HCT116 (cell line): ENCODE measurements at regions of chr12 and their contacts with region 1.

Region 1: GRCh38 chr12:122123051-122123760 is 44.6 kb downstream of the MLXIP start:
- DNase-seq: peak; percentile 41
- ATAC-seq: peak; percentile 81
- H3K4me3 ChIP-seq: no peak overlapping the region
- H3K27ac ChIP-seq: peak overlapping the region; percentile 47
- H3K4me1 ChIP-seq: peaks cover 11 to 12% of the 10 kb centered on the region in 2 experiments
- H3K27me3 ChIP-seq: no peaks in the 10 kb centered on the region
- CTCF ChIP-seq: peak; percentile 70 to 88 (median 86)
- POLR2A ChIP-seq: no peak
- RAD21 ChIP-seq: peak; percentile 96

Region 2: DNA sequence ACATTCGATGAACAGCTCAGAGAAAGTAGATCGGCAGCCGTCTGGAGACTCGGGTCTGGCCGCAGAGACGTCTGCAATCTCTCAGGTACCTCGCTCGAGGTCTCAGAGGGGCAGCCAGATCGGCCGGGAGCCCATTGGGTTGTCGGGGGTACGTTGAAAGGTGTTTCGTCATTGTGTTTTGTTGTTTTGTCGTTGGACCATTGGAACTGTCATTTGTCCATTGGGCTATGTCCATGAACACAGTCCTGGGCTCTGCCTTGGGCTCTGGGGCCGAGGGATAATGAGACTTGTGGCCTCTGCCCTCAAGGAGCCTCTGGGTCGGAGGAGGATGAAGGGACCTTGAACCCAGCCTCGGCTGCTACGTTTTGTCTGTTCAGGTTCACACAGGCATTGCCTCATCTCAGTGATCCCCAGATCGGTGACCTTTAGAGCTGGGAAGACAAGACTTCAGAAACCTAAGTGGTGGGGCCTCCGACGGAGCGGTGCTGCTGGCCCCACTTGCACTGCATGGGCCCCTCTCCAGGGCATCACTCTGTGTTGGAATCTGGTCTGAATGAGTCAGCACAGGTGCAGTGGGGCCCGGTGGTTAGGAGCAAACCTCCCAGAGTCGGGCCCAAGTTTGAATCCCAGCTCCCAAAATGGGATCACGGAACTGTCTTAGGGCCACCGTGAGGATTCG is 68.2 kb before region 1 on chr12:
- CTCF ChIA-PET with region 1: interaction called, 29 read pairs
- POLR2A ChIA-PET with region 1: no interaction called
- RAD21 ChIA-PET with region 1: interaction called in 1 of 2 experiments, 5 read pairs
- intact Hi-C with region 1: loop called (anchors 1 kb)
- DNase-seq: no peak
- ATAC-seq: no peak
- H3K4me3 ChIP-seq: no peak overlapping the region
- H3K27ac ChIP-seq: no peak overlapping the region
- H3K4me1 ChIP-seq: peaks cover 0 to 6% of the 10 kb centered on the region in 2 experiments; a peak in 1 of 4 replicates
- H3K27me3 ChIP-seq: no peaks in the 10 kb centered on the region
- CTCF ChIP-seq: no peak
- POLR2A ChIP-seq: no peak
- RAD21 ChIP-seq: no peak

Region 3: DNA sequence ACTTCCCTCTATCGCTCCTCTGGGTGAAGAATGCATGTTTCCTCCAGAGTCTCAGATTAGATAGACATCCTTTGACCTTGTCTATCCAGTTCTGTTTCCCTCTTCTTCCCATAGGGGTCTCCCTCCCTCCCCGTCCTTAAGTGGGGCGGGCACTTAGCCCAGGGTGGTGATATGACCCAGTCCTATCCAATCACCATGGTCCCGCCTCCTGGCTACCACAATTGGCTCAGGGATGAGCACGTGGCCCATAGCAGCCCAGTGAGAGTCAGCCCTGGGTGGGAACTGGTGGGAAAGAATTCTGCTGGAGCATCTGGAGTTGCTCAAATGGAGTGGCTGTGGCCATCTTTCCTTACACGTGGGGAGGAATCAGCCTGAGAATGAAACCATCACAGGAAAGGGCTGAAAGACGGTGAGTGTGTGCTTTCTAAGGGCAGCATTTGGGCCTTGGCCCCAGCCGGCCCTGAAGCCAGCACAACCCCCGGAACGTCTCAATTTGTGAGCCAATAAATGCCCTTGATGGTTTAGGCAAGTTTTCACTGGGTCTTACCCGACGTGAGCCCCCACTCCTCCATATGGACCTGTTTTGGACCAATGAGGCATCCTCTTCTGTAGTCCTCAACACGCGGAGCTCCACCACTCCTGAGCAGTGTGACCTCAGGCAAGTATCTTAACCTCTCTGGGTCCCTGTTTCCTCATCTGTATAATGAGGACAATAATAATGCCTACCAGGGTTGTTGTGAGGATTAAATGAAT is 59.0 kb before region 1 on chr12:
- CTCF ChIA-PET with region 1: interaction called, 13 read pairs
- POLR2A ChIA-PET with region 1: no interaction called
- RAD21 ChIA-PET with region 1: no interaction called
- intact Hi-C with region 1: loop called (anchors 2 kb)
- DNase-seq: peak; percentile 99
- ATAC-seq: peak; percentile 92
- H3K4me3 ChIP-seq: peak overlapping the region; percentile 55
- H3K27ac ChIP-seq: peak overlapping the region; percentile 82
- H3K4me1 ChIP-seq: peaks cover 25 to 37% of the 10 kb centered on the region in 2 experiments
- H3K27me3 ChIP-seq: no peaks in the 10 kb centered on the region
- CTCF ChIP-seq: peak; percentile 49 to 80 (median 64); a peak in 5 of 6 replicates
- POLR2A ChIP-seq: peak; percentile 84
- RAD21 ChIP-seq: peak; percentile 52; the same call in 1 of the 2 replicates

Region 4: DNA sequence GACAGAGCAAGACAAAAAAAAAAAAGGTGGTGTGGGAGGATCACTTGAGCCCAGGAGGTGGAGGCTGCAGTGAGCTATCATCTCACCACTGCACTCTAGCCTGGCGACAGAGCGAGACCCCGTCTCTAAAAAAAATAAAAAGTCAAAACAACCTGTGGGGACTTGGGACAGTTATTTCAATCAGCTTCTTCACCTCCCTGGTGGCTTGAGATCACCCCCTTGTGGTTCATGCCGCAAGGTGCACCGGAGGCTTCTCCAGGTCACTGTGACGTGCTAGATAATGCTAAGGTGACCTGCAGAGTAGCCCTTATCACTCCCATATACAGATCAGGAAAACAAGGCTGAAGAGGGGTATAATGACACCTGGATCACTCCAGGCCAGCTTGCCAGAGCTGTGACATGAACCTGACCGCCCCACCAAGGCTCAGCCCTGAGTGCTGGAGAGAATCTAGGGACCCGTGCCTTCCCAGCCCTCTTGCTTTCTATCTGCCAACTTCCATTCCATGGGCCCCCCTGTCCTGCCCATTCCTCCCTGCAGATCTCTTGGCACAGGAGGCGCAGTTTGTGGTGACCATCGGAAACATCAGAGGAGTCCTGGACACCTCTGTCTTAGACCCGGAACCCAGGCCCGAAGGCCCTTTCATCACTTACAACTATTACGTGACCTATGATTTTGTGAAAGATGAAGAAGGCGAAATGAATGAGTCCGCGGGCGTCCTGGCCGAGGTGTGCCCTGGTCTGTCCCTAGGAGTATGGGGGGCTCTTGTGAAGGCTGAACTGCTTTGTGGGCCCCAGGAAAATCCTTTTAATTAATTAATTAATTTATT is 67.8 kb after region 1 on chr12:
- CTCF ChIA-PET with region 1: interaction called, 3 read pairs
- POLR2A ChIA-PET with region 1: no interaction called
- RAD21 ChIA-PET with region 1: no interaction called
- intact Hi-C with region 1: loop called (anchors 2 kb)
- DNase-seq: peak; percentile 72
- ATAC-seq: peak; percentile 98
- H3K4me3 ChIP-seq: no peak overlapping the region
- H3K27ac ChIP-seq: no peak overlapping the region
- H3K4me1 ChIP-seq: no peaks in the 10 kb centered on the region
- H3K27me3 ChIP-seq: no peaks in the 10 kb centered on the region
- CTCF ChIP-seq: peak; percentile 89 to 95 (median 91)
- POLR2A ChIP-seq: no peak
- RAD21 ChIP-seq: peak; percentile 93

Region 5: GRCh38 chr12:122687086-122687485 is 563.9 kb after region 1 on chr12:
- CTCF ChIA-PET with region 1: no interaction called
- POLR2A ChIA-PET with region 1: no interaction called
- RAD21 ChIA-PET with region 1: no interaction called
- intact Hi-C with region 1: no loop called
- DNase-seq: no peak
- ATAC-seq: no peak
- H3K4me3 ChIP-seq: no peak overlapping the region
- H3K27ac ChIP-seq: no peak overlapping the region
- H3K4me1 ChIP-seq: no peaks in the 10 kb centered on the region; a peak in 1 of 4 replicates
- H3K27me3 ChIP-seq: no peaks in the 10 kb centered on the region
- CTCF ChIP-seq: no peak
- POLR2A ChIP-seq: no peak
- RAD21 ChIP-seq: no peak